ENCODE measurements at regions of chr17 and their contacts with region 1.

Region 1: DNA sequence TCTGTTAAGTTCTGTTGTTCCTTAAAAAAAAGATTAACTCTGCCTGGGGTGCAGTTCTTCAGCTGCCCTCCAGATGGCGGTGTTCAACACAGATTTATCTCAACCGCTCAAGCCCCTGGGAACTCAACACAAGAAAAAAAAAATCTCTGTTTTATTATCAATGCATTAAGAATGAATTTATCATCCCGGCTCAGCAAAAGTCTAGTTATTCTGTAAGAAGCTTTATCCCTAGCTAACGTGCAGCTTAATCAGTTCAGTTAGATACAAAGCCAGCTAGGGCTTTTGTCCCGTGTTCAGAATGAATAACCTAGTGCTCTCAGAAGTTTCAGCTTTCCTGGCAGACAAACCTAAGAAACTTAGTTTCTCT is 475.9 kb upstream of the CCL2 start:
- DNase-seq: peak; percentile 68 to 78 (median 71)
- ATAC-seq: peak; percentile 75
- H3K4me3 ChIP-seq: no peak overlapping the region
- H3K27ac ChIP-seq: no peak overlapping the region
- H3K4me1 ChIP-seq: no peaks in the 10 kb centered on the region; a peak in 2 of 5 replicates
- H3K27me3 ChIP-seq: peaks cover 0 to 5% of the 10 kb centered on the region in 2 experiments; a peak in 2 of 5 replicates
- CTCF ChIP-seq: peak; percentile 75 to 98 (median 93)
- EP300 ChIP-seq: no peak
- POLR2A ChIP-seq: no peak
- RAD21 ChIP-seq: peak; percentile 84 to 87

Region 2: GRCh38 chr17:33651686-33652085 is 127.5 kb before region 1 on chr17:
- CTCF ChIA-PET with region 1: no interaction called
- POLR2A ChIA-PET with region 1: no interaction called
- in situ Hi-C with region 1: no loop called
- intact Hi-C with region 1: no loop called
- DNase-seq: peak in 2 of 4 experiments; percentile 11 to 17
- ATAC-seq: peak; percentile 52; the same call in 2 of the 3 replicates
- H3K4me3 ChIP-seq: no peak overlapping the region
- H3K27ac ChIP-seq: no peak overlapping the region
- H3K4me1 ChIP-seq: no peaks in the 10 kb centered on the region
- H3K27me3 ChIP-seq: no peaks in the 10 kb centered on the region; a peak in 1 of 5 replicates
- CTCF ChIP-seq: peak; percentile 10 to 50 (median 41); a peak in 3 of 6 replicates
- EP300 ChIP-seq: no peak
- POLR2A ChIP-seq: no peak
- RAD21 ChIP-seq: peak in 1 of 2 experiments; percentile 33; a peak in 1 of 4 replicates

Region 3: DNA sequence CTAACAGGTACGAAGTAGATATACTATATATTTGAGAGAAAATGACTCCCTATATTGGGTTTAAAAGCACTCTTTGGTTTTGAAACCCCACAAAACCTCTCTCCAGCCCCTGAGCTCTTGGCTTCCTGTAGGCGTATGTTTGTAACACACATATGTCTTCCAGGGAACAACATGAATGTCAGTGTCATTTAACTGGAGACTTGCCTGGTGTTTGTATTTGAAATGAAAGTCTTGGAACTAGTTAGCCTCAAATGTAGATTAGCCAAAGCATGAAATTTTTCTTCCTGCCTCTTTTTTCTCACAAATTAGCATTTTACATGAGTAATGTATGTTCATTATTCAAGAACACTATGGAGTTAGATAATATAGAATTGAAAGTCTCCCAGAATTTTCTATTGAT is 74.4 kb before region 1 on chr17:
- CTCF ChIA-PET with region 1: no interaction called
- POLR2A ChIA-PET with region 1: no interaction called
- in situ Hi-C with region 1: no loop called
- intact Hi-C with region 1: no loop called
- DNase-seq: no peak
- ATAC-seq: no peak
- H3K4me3 ChIP-seq: no peak overlapping the region
- H3K27ac ChIP-seq: no peak overlapping the region
- H3K4me1 ChIP-seq: no peaks in the 10 kb centered on the region
- H3K27me3 ChIP-seq: no peaks in the 10 kb centered on the region; a peak in 1 of 5 replicates
- CTCF ChIP-seq: no peak
- EP300 ChIP-seq: no peak
- POLR2A ChIP-seq: no peak
- RAD21 ChIP-seq: no peak

Region 4: GRCh38 chr17:33949100-33949499 is 169.9 kb after region 1 on chr17:
- CTCF ChIA-PET with region 1: interaction called, 18 read pairs
- POLR2A ChIA-PET with region 1: no interaction called
- in situ Hi-C with region 1: loop called (anchors 5 kb)
- intact Hi-C with region 1: loop called (anchors 1 kb)
- DNase-seq: peak; percentile 58 to 81 (median 69)
- ATAC-seq: peak; percentile 99
- H3K4me3 ChIP-seq: no peak overlapping the region
- H3K27ac ChIP-seq: no peak overlapping the region
- H3K4me1 ChIP-seq: peaks cover 11 to 30% of the 10 kb centered on the region in 2 experiments; a peak in 4 of 5 replicates
- H3K27me3 ChIP-seq: peaks cover 0 to 2% of the 10 kb centered on the region in 2 experiments; a peak in 1 of 5 replicates
- CTCF ChIP-seq: peak; percentile 85 to 89 (median 88)
- EP300 ChIP-seq: no peak
- POLR2A ChIP-seq: no peak
- RAD21 ChIP-seq: peak; percentile 82 to 95

Region 5: DNA sequence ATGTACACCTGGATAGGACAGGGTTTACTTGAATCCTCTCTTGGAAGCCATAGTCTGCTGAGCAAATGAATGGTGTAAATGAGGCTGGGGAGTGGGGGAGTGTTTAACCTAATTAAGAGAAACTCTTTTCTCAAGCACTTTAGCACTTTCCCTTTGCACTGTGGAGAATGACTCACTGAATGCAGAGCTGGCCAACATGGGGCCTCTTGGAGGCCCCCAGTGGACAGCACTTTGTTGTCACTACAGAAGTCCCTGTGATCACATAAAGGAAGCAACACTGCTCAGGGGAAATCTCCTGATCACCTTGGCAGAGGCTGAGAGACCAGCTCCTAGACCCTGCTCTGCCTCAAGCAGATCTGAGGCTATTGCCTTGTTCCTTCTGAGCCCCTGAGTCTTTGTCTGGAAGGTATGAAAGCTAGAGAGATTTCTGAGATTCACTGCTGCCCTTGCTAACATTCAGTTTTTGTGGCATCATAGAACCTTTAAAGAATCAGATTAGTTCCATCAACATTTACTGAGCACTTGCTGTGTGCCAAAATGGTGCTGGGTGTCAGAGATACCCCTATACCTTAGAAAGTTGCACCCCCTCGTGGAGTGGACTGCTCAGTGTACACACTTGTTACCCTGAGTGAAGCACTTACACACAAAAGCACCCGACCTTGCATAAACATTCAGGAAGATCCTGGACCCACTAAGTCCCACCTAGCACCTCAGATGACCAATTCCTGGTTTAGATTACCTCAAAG is 245.8 kb after region 1 on chr17:
- CTCF ChIA-PET with region 1: interaction called, 16 read pairs
- POLR2A ChIA-PET with region 1: no interaction called
- in situ Hi-C with region 1: no loop called
- intact Hi-C with region 1: loop called (anchors 10 kb)
- DNase-seq: peak in 3 of 4 experiments; percentile 14 to 21 (median 20)
- ATAC-seq: peak; percentile 74
- H3K4me3 ChIP-seq: no peak overlapping the region
- H3K27ac ChIP-seq: no peak overlapping the region
- H3K4me1 ChIP-seq: peaks cover 0 to 6% of the 10 kb centered on the region in 2 experiments; a peak in 1 of 5 replicates
- H3K27me3 ChIP-seq: no peaks in the 10 kb centered on the region; a peak in 1 of 5 replicates
- CTCF ChIP-seq: peak; percentile 22 to 53 (median 24); a peak in 3 of 6 replicates
- EP300 ChIP-seq: no peak
- POLR2A ChIP-seq: no peak
- RAD21 ChIP-seq: peak; percentile 17 to 54; a peak in 3 of 4 replicates

Region 6: DNA sequence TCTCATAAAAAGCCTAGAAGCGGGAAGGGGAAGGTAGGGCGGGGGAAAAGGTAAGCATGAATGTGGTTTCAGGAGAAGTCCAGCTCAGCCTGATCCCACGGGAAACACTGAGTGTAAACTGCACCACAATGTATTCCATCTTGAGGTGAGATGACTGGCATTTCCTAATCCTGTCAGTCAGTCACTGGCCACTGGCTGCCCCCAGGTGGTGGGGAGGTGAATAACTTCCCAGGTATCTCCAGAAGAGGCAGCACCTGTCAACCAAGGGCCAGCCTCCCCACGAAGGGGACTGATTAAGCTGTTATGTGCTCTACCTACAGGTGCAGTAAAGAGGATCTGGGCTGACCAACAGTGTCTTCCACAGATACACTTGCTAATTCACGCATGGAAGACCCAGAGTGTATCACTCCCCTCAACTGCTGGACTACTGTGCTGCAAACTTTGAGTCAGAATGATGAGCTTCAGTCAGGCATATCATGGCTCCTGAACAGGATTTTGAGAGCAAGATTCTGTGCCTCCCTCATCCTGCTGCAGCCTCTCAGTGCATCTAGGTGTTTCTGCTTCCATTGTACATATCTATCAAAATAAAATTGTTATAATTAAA is 367.3 kb after region 1 on chr17:
- CTCF ChIA-PET with region 1: interaction called, 39 read pairs
- POLR2A ChIA-PET with region 1: no interaction called
- in situ Hi-C with region 1: loop called (anchors 10 kb)
- intact Hi-C with region 1: loop called (anchors 1 kb)
- DNase-seq: peak; percentile 66 to 73 (median 69)
- ATAC-seq: peak; percentile 92
- H3K4me3 ChIP-seq: no peak overlapping the region
- H3K27ac ChIP-seq: no peak overlapping the region
- H3K4me1 ChIP-seq: no peaks in the 10 kb centered on the region
- H3K27me3 ChIP-seq: no peaks in the 10 kb centered on the region
- CTCF ChIP-seq: peak; percentile 90 to 98 (median 93)
- EP300 ChIP-seq: no peak
- POLR2A ChIP-seq: no peak
- RAD21 ChIP-seq: peak; percentile 52 to 84

Region 7: DNA sequence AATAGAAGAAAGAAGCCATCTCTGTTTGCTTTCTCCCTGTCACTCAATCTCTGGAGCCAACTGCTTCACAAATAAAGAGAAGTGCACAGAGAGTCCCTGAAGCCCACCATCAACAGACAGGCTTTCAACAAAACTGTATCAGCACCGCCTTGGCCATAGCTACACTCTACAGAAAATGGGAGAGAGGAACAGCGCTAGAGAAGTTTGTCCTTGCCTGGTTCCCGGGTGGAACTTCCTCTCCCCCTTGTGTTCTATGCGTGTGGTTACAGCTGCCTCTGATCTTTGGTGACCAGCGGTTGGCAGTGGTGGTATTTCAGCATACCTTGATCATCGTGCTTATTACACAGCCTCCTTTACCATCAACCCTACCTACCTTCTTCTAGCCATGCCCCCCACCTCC is 384.4 kb after region 1 on chr17:
- CTCF ChIA-PET with region 1: interaction called, 16 read pairs
- POLR2A ChIA-PET with region 1: no interaction called
- in situ Hi-C with region 1: no loop called
- intact Hi-C with region 1: no loop called
- DNase-seq: peak; percentile 17 to 34 (median 20)
- ATAC-seq: peak; percentile 53; the same call in 2 of the 3 replicates
- H3K4me3 ChIP-seq: no peak overlapping the region
- H3K27ac ChIP-seq: no peak overlapping the region
- H3K4me1 ChIP-seq: no peaks in the 10 kb centered on the region
- H3K27me3 ChIP-seq: peaks cover 0 to 4% of the 10 kb centered on the region in 2 experiments; a peak in 1 of 5 replicates
- CTCF ChIP-seq: peak; percentile 58 to 69 (median 61); a peak in 4 of 6 replicates
- EP300 ChIP-seq: no peak
- POLR2A ChIP-seq: no peak
- RAD21 ChIP-seq: peak; percentile 33 to 55; a peak in 3 of 4 replicates

Region 8: DNA sequence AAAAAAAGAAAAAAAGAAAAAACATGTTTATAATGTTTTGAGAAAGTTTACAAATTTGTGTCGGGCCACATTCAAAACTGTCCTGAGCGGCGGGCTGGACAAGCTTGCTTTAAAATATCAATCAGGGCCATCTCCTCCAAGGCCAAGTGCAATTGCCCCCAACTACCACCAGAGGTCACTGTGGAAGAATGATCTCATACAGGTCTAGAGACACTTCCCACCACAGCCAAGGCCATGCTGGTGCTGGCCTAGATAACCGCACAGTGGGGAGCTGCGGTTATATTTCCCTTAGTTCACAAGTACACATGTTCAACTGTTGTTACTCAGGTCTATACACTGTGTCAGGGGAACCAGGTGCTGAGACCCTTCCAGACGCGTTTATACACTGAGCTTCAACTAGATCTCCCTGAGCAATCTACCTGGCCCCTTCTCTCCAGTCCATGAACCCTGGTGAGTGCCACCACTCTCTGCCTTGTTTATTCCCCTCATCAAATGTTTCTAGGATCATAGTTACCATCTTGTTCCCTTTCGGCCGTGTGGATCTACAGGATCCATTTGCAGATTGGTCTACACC is 392.1 kb after region 1 on chr17:
- CTCF ChIA-PET with region 1: interaction called, 5 read pairs
- POLR2A ChIA-PET with region 1: interaction called, 3 read pairs
- in situ Hi-C with region 1: no loop called
- intact Hi-C with region 1: loop called (anchors 5 kb)
- DNase-seq: peak; percentile 80 to 84 (median 84)
- ATAC-seq: peak; percentile 97
- H3K4me3 ChIP-seq: no peak overlapping the region
- H3K27ac ChIP-seq: no peak overlapping the region
- H3K4me1 ChIP-seq: peaks cover 0 to 3% of the 10 kb centered on the region in 2 experiments; a peak in 1 of 5 replicates
- H3K27me3 ChIP-seq: no peaks in the 10 kb centered on the region
- CTCF ChIP-seq: peak; percentile 81 to 92 (median 89)
- EP300 ChIP-seq: no peak
- POLR2A ChIP-seq: no peak
- RAD21 ChIP-seq: peak; percentile 32 to 58

Region 9: DNA sequence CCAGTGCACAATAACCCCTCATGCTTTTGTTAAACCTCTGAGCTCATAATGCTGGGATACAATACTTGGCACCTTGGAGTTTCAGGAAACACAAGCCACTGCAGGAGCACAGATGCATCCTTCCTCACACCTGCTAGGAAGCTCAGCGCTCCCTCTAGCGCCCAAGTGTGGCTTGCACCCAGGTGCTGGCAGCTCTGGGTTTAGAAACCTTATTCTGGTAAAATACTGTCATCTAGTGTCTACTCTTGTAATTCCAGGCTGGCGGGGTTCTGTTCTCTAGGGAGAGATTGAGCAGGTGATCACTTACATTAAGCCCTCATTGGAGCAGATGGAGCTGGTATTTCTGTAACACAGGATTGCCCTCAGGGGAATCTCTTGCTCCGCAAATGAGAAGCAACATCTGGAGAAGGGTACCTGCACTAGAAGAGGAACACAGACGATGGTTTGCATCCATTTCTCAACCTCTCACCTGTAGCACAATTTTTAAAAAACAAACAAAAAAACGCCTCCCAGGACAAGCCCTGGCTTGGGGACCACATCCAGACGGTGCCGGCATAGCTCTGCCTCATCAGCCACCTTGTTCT is 582.4 kb after region 1 on chr17:
- CTCF ChIA-PET with region 1: interaction called, 11 read pairs
- POLR2A ChIA-PET with region 1: no interaction called
- in situ Hi-C with region 1: no loop called
- intact Hi-C with region 1: no loop called
- DNase-seq: peak; percentile 83 to 88 (median 86)
- ATAC-seq: peak; percentile 99
- H3K4me3 ChIP-seq: no peak overlapping the region
- H3K27ac ChIP-seq: no peak overlapping the region
- H3K4me1 ChIP-seq: no peaks in the 10 kb centered on the region; a peak in 1 of 5 replicates
- H3K27me3 ChIP-seq: no peaks in the 10 kb centered on the region
- CTCF ChIP-seq: peak; percentile 99 to 100 (median 100)
- EP300 ChIP-seq: no peak
- POLR2A ChIP-seq: no peak
- RAD21 ChIP-seq: peak; percentile 99 to 100